IMR-90 (cell line): ENCODE measurements at regions of chr7 and their contacts with region 1.

Region 1: DNA sequence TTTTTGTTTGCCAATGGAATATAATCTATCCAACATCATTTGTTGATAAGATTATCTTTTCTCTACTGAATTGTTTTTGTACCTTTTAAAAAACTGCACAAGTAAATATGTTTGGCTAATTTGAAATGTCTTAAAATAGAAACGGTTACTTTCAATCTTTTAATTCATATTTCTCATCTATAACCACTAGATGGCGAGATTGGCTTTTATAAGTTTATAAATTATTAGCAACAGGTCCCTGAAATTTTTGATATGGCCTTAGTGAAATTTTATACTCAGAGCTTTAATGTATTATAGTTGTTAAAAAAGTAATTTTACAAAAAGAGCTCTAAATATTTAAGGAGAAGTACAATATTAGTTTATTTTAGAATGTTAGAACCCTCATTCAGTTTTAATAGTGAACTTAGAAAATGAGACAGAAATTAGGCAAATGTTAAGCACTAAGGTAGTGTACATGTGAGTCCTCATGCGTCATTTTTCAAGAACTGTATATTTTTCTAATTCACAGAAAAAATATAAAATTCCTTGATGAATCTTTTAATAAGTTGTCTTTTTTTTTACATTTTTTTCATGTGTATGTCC is 592.5 kb downstream of the ARL4A start:
- DNase-seq: peak; percentile 10
- ATAC-seq: no peak
- H3K4me3 ChIP-seq: no peak overlapping the region
- H3K27ac ChIP-seq: no peak overlapping the region
- H3K4me1 ChIP-seq: no peaks in the 10 kb centered on the region
- H3K27me3 ChIP-seq: no peaks in the 10 kb centered on the region
- CTCF ChIP-seq: peak; percentile 39
- POLR2A ChIP-seq: no peak
- RAD21 ChIP-seq: peak; percentile 30

Region 2: GRCh38 chr7:13532028-13532753 is 252.2 kb after region 1 on chr7:
- CTCF ChIA-PET with region 1: no interaction called
- POLR2A ChIA-PET with region 1: no interaction called
- dilution Hi-C with region 1: no loop called
- in situ Hi-C with region 1: no loop called
- intact Hi-C with region 1: loop called (anchors 5 kb)
- DNase-seq: no peak
- ATAC-seq: no peak
- H3K4me3 ChIP-seq: no peak overlapping the region
- H3K27ac ChIP-seq: no peak overlapping the region
- H3K4me1 ChIP-seq: no peaks in the 10 kb centered on the region
- H3K27me3 ChIP-seq: no peaks in the 10 kb centered on the region; the same call in 1 of the 2 replicates
- CTCF ChIP-seq: no peak
- POLR2A ChIP-seq: no peak
- RAD21 ChIP-seq: no peak

Region 3: GRCh38 chr7:13742811-13743210 is 462.9 kb after region 1 on chr7:
- CTCF ChIA-PET with region 1: interaction called, 3 read pairs
- POLR2A ChIA-PET with region 1: no interaction called
- dilution Hi-C with region 1: no loop called
- in situ Hi-C with region 1: loop called (anchors 25 kb)
- intact Hi-C with region 1: no loop called
- DNase-seq: peak; percentile 56
- ATAC-seq: peak; percentile 90
- H3K4me3 ChIP-seq: no peak overlapping the region
- H3K27ac ChIP-seq: no peak overlapping the region
- H3K4me1 ChIP-seq: peaks cover 2% of the 10 kb centered on the region
- H3K27me3 ChIP-seq: no peaks in the 10 kb centered on the region
- CTCF ChIP-seq: peak; percentile 50
- POLR2A ChIP-seq: no peak
- RAD21 ChIP-seq: peak; percentile 44

Region 4: DNA sequence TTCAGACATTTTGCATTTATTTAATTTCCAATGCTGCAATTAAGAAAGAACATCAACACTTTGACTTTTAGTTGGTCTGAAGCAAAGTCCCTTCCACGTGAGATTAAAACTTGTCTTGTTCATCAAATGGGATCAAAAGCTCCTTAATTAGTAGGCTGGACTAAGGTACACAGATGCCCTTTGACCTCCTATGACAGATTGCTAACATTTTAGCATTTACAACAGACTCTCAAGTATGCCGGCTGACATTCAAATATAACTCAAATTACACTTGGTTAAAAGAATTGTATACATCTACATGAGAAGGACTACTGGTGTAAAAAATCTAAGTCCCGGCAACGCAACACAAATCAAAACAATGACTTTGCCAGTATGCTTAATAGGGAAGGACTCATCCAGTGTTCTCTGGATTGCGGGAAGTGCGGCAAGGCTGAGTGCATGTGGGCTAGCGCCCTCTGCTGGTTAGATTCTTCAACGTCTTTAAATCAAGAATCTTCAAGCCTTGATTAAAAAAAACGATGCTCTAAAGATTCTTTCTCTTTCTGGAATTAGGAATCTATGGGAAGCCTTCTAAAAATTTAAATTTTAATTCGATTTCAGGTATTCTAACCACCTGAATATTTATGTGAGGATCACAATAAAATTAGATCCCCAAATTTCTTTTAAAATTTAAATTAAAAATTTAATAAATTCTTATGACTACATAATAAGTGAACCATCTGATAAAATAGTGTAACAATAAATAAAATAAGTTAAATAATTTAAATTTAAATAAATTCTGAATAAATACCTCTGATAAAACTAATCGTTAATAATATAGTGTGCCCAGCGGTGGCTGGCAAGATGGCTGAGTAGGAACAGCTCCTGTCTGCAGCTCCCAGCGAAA is 1177.9 kb after region 1 on chr7:
- CTCF ChIA-PET with region 1: interaction called, 3 read pairs
- POLR2A ChIA-PET with region 1: no interaction called
- dilution Hi-C with region 1: no loop called
- in situ Hi-C with region 1: loop called (anchors 5 kb)
- intact Hi-C with region 1: loop called (anchors 1 kb)
- DNase-seq: peak; percentile 82
- ATAC-seq: peak; percentile 91
- H3K4me3 ChIP-seq: no peak overlapping the region
- H3K27ac ChIP-seq: no peak overlapping the region
- H3K4me1 ChIP-seq: no peaks in the 10 kb centered on the region
- H3K27me3 ChIP-seq: no peaks in the 10 kb centered on the region
- CTCF ChIP-seq: peak; percentile 84
- POLR2A ChIP-seq: no peak
- RAD21 ChIP-seq: peak; percentile 91

Region 5: DNA sequence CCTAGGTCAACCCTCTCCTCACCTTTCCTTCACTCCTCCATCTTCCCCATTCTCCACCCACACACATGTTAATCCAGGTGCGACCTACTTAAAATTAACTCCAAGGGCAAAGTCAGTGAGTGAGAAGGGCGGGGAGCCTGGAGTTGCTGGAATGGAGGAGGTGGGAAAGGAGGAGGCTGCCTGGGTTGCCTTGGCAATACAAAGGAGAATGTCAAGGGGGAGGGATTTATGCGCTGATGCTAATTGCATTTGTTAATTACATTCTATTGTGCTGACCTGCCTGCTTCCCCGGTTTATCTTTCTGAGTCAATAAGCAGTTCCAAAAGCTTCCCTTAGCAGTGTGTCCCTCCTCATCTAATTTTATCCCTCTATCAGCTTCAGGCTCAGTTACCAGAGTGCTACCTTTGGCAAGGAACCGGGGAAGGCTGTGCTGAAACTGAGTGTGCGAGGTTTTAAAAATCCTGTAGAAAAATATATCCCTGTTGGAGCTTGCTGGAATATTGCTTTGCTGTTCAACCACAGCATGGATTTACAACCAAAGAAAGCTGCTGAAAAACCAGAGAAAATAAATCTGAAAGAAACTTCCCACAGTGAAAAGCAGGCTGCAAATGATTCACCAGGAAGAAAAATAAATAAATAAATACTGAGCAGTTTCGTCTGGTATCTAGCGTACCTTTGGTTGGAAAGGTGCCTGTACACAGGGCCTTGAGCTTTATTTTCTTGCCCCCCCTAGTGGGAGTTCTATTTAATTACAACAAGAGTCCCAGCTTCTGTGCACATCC is 1735.8 kb after region 1 on chr7:
- CTCF ChIA-PET with region 1: interaction called, 3 read pairs
- POLR2A ChIA-PET with region 1: no interaction called
- dilution Hi-C with region 1: no loop called
- in situ Hi-C with region 1: no loop called
- intact Hi-C with region 1: loop called (anchors 5 kb)
- DNase-seq: peak; percentile 49
- ATAC-seq: peak; percentile 85
- H3K4me3 ChIP-seq: no peak overlapping the region
- H3K27ac ChIP-seq: no peak overlapping the region
- H3K4me1 ChIP-seq: no peaks in the 10 kb centered on the region
- H3K27me3 ChIP-seq: no peaks in the 10 kb centered on the region
- CTCF ChIP-seq: peak; percentile 54
- POLR2A ChIP-seq: no peak
- RAD21 ChIP-seq: peak; percentile 40